OCI-LY7 (cell line): ENCODE measurements at regions of chr4 and their contacts with region 1.

Region 1: DNA sequence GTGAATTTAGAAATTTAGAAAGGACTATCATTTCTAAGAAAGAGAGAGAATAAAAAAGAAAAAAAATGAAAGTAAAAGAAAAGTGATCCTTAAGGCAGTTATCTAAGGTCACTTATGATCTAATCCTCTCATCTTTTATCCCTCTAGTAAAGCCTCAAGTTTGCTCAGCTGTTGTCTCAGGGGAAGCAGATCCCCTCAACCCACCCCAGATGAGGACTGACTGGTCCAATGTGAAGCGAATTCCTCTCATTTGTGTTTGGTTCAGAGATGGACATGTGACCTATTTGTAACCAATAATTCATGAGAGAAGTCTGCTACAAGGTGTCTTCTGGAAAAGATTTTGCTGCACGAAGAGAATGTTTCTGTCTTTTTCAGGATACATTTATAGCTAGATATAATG is 1591.3 kb downstream of the ADGRL3 start:
- DNase-seq: no peak
- H3K4me3 ChIP-seq: no peak overlapping the region
- H3K27ac ChIP-seq: no peak overlapping the region
- H3K4me1 ChIP-seq: no peaks in the 10 kb centered on the region
- CTCF ChIP-seq: no peak

Region 2: DNA sequence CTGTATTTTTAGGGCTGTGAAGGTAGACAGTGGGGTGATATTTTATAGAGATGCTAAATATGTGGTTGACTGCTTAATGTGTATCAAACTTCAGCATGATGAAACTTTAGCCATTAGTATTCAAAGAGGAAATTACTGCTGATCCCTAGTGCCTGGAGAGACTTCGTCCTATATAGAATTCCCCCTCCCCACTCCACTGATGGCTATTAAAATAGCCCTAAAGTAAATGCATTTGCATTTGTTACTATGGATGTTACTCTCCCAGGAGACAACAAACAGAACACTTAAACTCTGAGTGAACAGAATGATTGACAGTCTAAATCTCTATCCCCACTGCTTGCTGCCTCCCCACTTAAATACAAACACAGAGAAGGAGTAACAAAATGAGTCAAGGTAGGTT is 1552.1 kb before region 1 on chr4:
- CTCF ChIA-PET with region 1: no interaction called
- POLR2A ChIA-PET with region 1: interaction called, 10 read pairs
- intact Hi-C with region 1: no loop called
- DNase-seq: no peak
- H3K4me3 ChIP-seq: no peak overlapping the region
- H3K27ac ChIP-seq: no peak overlapping the region
- H3K4me1 ChIP-seq: no peaks in the 10 kb centered on the region
- CTCF ChIP-seq: no peak

Region 3: DNA sequence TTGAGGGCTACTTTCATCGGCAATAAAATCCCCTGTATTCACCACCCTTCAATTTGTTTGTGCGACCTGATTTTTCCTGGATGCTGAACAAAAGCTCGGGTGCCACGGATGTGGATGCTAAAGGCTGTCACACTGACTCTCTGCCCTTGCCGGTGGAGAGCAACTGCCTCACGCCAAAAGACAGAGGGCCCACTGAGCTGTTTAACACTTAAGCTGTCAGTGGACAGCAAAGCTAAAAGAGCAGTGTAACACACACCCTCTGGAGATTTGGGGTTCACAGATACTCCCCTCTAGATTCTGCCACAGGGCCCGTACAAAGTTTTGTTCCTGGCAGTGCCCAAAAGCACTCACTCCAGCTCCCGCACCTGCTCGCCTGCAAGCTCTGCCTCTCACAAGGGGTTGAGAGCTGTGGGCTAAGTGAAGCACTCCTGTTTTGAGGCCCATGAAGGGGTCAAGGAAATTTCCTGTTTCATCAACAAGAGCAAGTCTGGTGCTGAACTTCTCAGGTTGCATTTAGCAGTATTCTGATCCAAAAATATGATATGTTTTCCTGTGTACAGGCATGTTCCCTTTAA is 19.3 kb before region 1 on chr4:
- CTCF ChIA-PET with region 1: no interaction called
- POLR2A ChIA-PET with region 1: no interaction called
- intact Hi-C with region 1: no loop called
- DNase-seq: no peak
- H3K4me3 ChIP-seq: no peak overlapping the region
- H3K27ac ChIP-seq: no peak overlapping the region
- H3K4me1 ChIP-seq: no peaks in the 10 kb centered on the region
- CTCF ChIP-seq: no peak

Region 4: DNA sequence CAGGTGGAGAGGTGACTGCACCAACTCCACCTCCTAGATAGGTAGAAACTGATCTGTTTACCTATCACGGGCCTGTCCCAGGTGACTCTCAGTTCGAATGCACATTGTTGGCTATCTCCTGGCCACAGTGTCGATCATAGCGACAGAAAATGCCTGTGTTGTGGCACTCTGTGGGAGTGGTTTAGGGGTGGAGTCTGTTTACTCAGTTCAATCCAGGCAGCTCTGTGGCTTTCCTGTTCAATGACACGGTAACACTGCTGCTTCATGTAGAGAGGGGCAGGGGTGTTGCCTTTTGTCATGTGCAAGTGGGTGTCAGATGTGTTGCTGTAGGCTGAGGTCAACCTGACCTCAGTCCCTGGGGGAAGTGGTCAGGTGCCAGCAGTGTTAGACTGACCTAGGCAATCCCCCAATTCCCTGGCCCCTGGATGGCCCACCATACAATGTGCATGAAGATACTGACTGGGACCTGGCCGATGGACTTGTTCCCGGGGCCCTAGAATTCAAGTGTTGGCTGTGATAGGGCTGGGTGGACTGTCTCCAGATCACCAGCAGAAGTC is 15.5 kb after region 1 on chr4:
- CTCF ChIA-PET with region 1: no interaction called
- POLR2A ChIA-PET with region 1: no interaction called
- intact Hi-C with region 1: no loop called
- DNase-seq: no peak
- H3K4me3 ChIP-seq: no peak overlapping the region
- H3K27ac ChIP-seq: no peak overlapping the region
- H3K4me1 ChIP-seq: no peaks in the 10 kb centered on the region
- CTCF ChIP-seq: no peak